PC-9 (cell line): ENCODE measurements at regions of chr12 and their contacts with region 1.

Region 1: GRCh38 chr12:15662303-15662980 is 126.7 kb downstream of the EPS8 start:
- DNase-seq: peak in 1 of 2 experiments; percentile 96
- H3K4me3 ChIP-seq: peak overlapping the region; percentile 13; the same call in 1 of the 2 replicates
- H3K27ac ChIP-seq: peak overlapping the region; percentile 97
- H3K4me1 ChIP-seq: peaks cover 23% of the 10 kb centered on the region
- H3K27me3 ChIP-seq: no peaks in the 10 kb centered on the region
- CTCF ChIP-seq: no peak

Region 2: GRCh38 chr12:15393037-15393436 is 269.4 kb before region 1 on chr12:
- CTCF ChIA-PET with region 1: no interaction called
- POLR2A ChIA-PET with region 1: no interaction called
- intact Hi-C with region 1: no loop called
- DNase-seq: no peak
- H3K4me3 ChIP-seq: no peak overlapping the region
- H3K27ac ChIP-seq: no peak overlapping the region
- H3K4me1 ChIP-seq: no peaks in the 10 kb centered on the region
- H3K27me3 ChIP-seq: no peaks in the 10 kb centered on the region
- CTCF ChIP-seq: no peak

Region 3: GRCh38 chr12:15590180-15590826 is 72.1 kb before region 1 on chr12:
- CTCF ChIA-PET with region 1: no interaction called
- POLR2A ChIA-PET with region 1: interaction called, 3 read pairs
- intact Hi-C with region 1: loop called (anchors 2 kb)
- DNase-seq: peak; percentile 55 to 64
- H3K4me3 ChIP-seq: peak overlapping the region; percentile 35; the same call in 1 of the 2 replicates
- H3K27ac ChIP-seq: no peak overlapping the region
- H3K4me1 ChIP-seq: peaks cover 8% of the 10 kb centered on the region; the same call in 1 of the 2 replicates
- H3K27me3 ChIP-seq: no peaks in the 10 kb centered on the region
- CTCF ChIP-seq: peak; percentile 92

Region 4: GRCh38 chr12:15682826-15683225 is 20.4 kb after region 1 on chr12:
- CTCF ChIA-PET with region 1: interaction called, 17 read pairs
- POLR2A ChIA-PET with region 1: interaction called, 9 read pairs
- intact Hi-C with region 1: loop called (anchors 2 kb)
- DNase-seq: peak in 1 of 2 experiments; percentile 63
- H3K4me3 ChIP-seq: no peak overlapping the region
- H3K27ac ChIP-seq: peak overlapping the region; percentile 31; the same call in 1 of the 2 replicates
- H3K4me1 ChIP-seq: peaks cover 22% of the 10 kb centered on the region
- H3K27me3 ChIP-seq: no peaks in the 10 kb centered on the region
- CTCF ChIP-seq: no peak

Region 5: DNA sequence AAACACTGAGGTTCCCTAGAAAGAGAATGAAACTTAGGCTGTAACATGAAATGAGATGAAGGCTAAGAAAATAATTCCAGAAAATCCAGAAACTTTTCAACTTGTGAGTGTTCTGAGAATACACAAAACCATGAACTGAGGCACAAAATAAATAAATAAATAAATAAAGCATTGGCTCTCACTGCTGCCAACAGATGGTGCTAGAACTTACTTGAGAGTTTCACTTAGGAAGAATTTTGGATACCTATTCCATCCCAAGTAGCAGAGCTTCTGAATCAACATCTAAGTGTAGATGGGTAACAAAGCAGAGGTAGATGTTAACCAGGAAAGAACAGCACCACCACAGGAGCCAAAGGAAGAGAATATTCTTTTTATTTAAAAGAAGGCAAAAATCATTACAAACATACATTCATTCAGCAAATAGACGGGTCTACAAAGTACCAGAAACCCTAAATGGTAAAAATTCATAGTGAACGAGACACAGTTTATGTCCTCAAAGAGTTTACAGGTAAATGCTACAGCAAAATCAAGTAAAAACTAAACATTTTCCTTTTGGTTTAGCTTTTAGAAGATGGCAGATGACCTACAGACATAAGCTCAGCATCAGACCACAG is 110.1 kb after region 1 on chr12:
- CTCF ChIA-PET with region 1: interaction called, 4 read pairs
- POLR2A ChIA-PET with region 1: interaction called, 41 read pairs
- intact Hi-C with region 1: no loop called
- DNase-seq: no peak
- H3K4me3 ChIP-seq: no peak overlapping the region
- H3K27ac ChIP-seq: no peak overlapping the region
- H3K4me1 ChIP-seq: peaks cover 17% of the 10 kb centered on the region; the same call in 1 of the 2 replicates
- H3K27me3 ChIP-seq: no peaks in the 10 kb centered on the region
- CTCF ChIP-seq: peak; percentile 59; the same call in 1 of the 2 replicates

Region 6: DNA sequence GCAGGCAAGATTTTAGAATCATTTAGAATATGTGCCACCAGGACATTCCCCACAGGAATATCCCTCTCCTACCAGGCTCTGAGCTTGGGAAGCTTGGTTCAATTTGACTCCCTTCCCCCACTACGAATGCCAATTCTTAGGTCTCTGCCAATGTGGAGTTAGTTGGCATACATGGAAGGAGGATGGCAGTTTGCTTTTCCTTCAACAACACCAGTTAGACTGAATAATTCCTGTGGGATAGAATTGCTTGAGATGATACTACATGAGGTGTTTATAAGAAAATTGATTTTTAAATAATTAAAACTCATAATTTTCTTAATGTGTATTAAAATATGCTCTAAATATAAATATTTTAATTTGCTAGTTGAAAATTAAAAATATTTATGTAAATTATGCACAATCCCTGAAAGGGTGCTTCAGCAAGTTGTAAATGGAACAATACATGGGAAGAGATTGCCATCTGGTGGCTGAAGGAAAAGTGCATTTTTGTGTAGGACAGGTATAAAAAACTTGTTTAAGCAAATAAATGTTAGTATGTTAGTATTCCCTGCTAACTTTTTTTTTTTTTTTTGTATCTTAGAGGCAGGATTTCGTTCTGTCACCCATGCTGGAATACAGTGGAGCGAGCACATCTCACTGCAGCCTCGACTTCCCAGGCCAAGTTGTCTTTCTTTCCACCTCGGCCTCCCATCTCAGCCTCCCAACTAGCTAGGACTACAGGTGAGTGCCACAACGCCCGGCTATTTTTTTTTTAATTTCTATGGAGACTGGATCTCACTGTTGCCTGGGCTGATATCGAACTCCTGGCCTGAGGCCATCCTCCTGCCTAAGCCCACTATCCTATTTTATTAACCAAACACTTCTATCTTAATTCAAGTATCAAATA is 193.9 kb after region 1 on chr12:
- CTCF ChIA-PET with region 1: interaction called, 6 read pairs
- POLR2A ChIA-PET with region 1: no interaction called
- intact Hi-C with region 1: loop called (anchors 2 kb)
- DNase-seq: peak; percentile 63 to 65
- H3K4me3 ChIP-seq: peak overlapping the region; percentile 18; the same call in 1 of the 2 replicates
- H3K27ac ChIP-seq: peak overlapping the region; percentile 84
- H3K4me1 ChIP-seq: peaks cover 26% of the 10 kb centered on the region
- H3K27me3 ChIP-seq: no peaks in the 10 kb centered on the region
- CTCF ChIP-seq: peak; percentile 89